Endothelial cell of umbilical vein (primary cell): ENCODE measurements at regions of chr15 and their contacts with region 1.

Region 1: GRCh38 chr15:35444557-35445204 is 101.3 kb downstream of the DPH6 start:
- DNase-seq: peak; percentile 72
- H3K4me3 ChIP-seq: no peak overlapping the region
- H3K27ac ChIP-seq: no peak overlapping the region
- H3K4me1 ChIP-seq: peaks cover 4% of the 10 kb centered on the region
- H3K27me3 ChIP-seq: peaks cover 0 to 2% of the 10 kb centered on the region in 2 experiments
- CTCF ChIP-seq: peak; percentile 59 to 68
- POLR2A ChIP-seq: no peak

Region 2: DNA sequence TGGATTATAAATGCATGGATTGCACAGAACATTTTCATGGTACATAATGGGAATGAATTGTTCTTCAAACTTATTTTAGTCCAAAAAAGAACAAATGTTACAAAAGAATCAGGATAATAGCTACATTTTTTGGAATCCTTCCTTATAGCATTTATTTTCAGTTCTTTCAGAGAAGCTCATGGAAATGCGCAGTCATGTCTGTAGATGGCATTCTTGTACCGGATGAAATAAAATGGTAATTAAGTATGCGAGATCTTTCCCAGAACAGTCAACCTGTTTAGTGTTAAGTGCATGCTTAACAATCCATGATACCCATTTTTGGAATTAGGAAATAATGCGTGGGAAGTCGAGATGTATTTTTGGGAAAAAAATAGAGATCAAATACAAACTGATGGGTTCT is 823.0 kb before region 1 on chr15:
- CTCF ChIA-PET with region 1: interaction called, 10 read pairs
- POLR2A ChIA-PET with region 1: no interaction called
- dilution Hi-C with region 1: no loop called
- intact Hi-C with region 1: loop called (anchors 10 kb)
- DNase-seq: peak; percentile 69
- H3K4me3 ChIP-seq: no peak overlapping the region
- H3K27ac ChIP-seq: peak overlapping the region; percentile 61
- H3K4me1 ChIP-seq: peaks cover 41% of the 10 kb centered on the region
- H3K27me3 ChIP-seq: no peaks in the 10 kb centered on the region
- CTCF ChIP-seq: peak; percentile 16 to 38
- POLR2A ChIP-seq: no peak

Region 3: DNA sequence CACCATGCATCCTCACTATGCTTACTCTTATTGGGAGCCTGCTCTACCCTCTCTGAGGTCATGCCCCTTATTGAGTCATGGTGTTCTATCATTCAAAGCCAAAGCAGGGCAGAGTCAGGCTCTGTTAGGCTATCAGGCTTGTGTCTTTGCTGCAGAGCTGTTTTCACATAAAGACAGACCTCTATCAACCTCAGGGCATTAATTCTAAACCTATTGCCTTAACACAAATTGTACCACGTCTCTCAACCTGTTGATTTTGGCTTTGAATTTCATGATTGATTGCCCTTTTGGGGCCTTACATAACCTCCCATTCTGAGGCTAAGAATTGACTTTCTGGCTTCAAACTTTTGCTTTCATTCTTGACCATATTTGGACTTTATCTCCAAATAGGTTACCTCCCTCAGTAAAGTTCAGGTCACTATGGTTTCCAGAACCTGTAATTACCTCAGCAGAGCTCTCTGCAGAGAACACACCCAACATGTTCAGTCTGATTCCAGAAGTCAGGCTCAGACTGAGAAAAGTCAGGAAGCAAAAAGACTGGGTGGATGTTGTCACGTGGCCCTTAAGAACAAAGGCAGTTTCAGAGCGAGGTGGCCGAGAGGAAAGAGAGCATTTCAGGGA is 138.2 kb before region 1 on chr15:
- CTCF ChIA-PET with region 1: interaction called, 82 read pairs
- POLR2A ChIA-PET with region 1: interaction called, 3 read pairs
- dilution Hi-C with region 1: no loop called
- intact Hi-C with region 1: loop called (anchors 5 kb)
- DNase-seq: peak; percentile 83
- H3K4me3 ChIP-seq: peak overlapping the region in 1 of 3 experiments; percentile 12
- H3K27ac ChIP-seq: peak overlapping the region; percentile 99
- H3K4me1 ChIP-seq: peaks cover 60% of the 10 kb centered on the region
- H3K27me3 ChIP-seq: no peaks in the 10 kb centered on the region
- CTCF ChIP-seq: no peak
- POLR2A ChIP-seq: no peak

Region 4: DNA sequence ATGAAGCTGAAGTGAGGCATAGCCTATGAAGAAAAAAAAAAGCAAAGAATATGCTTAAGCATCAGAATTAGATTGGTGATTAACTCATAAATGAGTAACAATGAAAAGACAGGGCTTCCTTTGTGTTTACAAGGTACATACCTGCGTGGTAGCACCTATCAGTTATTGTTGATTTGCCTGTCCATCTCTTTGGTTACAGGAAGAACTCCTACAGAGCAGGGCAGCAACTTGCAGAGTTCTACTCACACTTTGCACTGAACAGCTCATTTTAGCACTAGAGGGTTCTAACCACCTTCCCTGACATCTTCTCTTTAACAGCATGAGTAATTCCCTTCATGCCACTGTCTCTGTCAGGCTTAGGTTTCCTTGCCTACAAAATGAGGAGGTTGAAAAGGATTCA is 64.7 kb before region 1 on chr15:
- CTCF ChIA-PET with region 1: interaction called, 10 read pairs
- POLR2A ChIA-PET with region 1: no interaction called
- dilution Hi-C with region 1: no loop called
- intact Hi-C with region 1: no loop called
- DNase-seq: no peak
- H3K4me3 ChIP-seq: no peak overlapping the region
- H3K27ac ChIP-seq: no peak overlapping the region
- H3K4me1 ChIP-seq: no peaks in the 10 kb centered on the region
- H3K27me3 ChIP-seq: no peaks in the 10 kb centered on the region
- CTCF ChIP-seq: no peak
- POLR2A ChIP-seq: no peak

Region 5: DNA sequence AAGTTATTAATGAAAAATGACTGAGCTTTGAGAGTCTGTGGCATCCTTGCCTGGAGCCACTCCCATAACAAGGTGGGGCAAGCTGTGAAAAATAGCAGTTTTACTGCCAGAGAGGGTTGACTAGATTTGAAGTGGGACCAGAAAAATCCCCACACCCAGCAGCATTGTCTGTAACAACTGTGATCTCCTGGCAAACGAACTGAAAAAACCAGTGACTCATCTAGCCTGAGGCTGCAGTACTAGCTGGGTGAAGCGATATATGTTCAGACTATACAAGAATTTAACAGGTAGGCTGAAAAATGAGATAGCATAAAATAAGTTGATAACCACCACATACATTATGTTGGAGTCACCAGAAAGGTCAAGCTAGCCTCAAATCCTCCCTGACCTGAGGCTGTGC is 37.3 kb after region 1 on chr15:
- CTCF ChIA-PET with region 1: interaction called, 12 read pairs
- POLR2A ChIA-PET with region 1: interaction called, 3 read pairs
- dilution Hi-C with region 1: no loop called
- intact Hi-C with region 1: no loop called
- DNase-seq: peak; percentile 67
- H3K4me3 ChIP-seq: no peak overlapping the region
- H3K27ac ChIP-seq: no peak overlapping the region
- H3K4me1 ChIP-seq: peaks cover 23% of the 10 kb centered on the region
- H3K27me3 ChIP-seq: no peaks in the 10 kb centered on the region
- CTCF ChIP-seq: no peak
- POLR2A ChIP-seq: no peak

Region 6: GRCh38 chr15:35596285-35596684 is 151.6 kb after region 1 on chr15:
- CTCF ChIA-PET with region 1: no interaction called
- POLR2A ChIA-PET with region 1: no interaction called
- dilution Hi-C with region 1: no loop called
- intact Hi-C with region 1: no loop called
- DNase-seq: no peak
- H3K4me3 ChIP-seq: no peak overlapping the region
- H3K27ac ChIP-seq: no peak overlapping the region
- H3K4me1 ChIP-seq: no peaks in the 10 kb centered on the region
- H3K27me3 ChIP-seq: no peaks in the 10 kb centered on the region
- CTCF ChIP-seq: no peak
- POLR2A ChIP-seq: no peak

Region 7: DNA sequence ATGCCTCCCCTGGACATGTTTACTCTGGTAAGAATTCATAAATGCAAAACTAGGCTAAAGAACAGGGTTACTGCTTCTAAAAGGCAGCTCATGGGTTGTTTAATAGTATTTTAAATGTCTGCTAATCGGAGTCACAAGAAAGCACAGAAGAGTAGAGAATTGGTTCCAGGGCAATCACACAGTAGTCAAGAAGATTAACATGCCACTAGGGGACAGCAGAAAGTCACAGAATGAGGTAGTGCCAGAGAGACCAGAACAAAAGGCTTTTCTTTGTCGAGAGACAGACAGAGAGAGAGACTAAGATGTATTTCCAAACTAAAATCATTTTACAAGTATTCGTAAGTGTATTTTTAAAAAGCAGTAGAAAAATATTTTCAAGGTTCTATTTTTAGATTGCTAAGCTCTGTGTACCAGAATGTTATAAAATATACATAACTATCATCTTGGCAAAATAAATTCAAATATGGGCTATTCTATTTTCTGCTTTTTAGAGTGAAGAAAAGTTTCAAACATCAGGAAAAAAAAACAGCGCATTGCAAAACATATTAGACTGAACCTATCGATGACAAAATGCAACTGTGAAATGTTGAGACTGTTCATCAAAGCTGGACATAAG is 1056.5 kb after region 1 on chr15:
- CTCF ChIA-PET with region 1: interaction called, 4 read pairs
- POLR2A ChIA-PET with region 1: no interaction called
- dilution Hi-C with region 1: no loop called
- intact Hi-C with region 1: loop called (anchors 5 kb)
- DNase-seq: peak; percentile 69
- H3K4me3 ChIP-seq: no peak overlapping the region
- H3K27ac ChIP-seq: no peak overlapping the region
- H3K4me1 ChIP-seq: peaks cover 4% of the 10 kb centered on the region
- H3K27me3 ChIP-seq: no peaks in the 10 kb centered on the region
- CTCF ChIP-seq: peak; percentile 55 to 64
- POLR2A ChIP-seq: no peak